ENCODE measurements at regions of chr2 and their contacts with region 1.

Region 1: DNA sequence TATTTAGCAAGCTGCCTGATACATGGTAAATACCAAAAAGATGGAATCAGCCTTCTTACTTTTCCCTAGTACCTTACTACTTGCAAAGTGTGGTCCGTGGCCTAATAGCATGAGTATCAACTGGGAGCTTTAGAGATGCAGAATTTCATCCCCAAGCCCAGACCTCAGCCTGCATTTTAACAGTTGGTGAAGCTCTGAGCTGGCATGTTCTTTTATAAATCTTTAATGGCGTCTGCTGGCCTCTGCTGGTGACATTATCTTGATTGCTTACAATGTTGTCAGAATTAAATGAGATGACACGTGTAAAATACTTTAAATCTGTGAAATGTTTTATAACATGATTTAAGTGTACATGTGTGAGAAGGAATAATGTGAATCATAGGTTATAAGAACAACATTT is 115.1 kb upstream of the NOSTRIN start:
- DNase-seq: no peak
- H3K4me3 ChIP-seq: no peak overlapping the region
- CTCF ChIP-seq: no peak

Region 2: GRCh38 chr2:168705534-168706470 is 18.5 kb after region 1 on chr2:
- CTCF ChIA-PET with region 1: interaction called, 16 read pairs
- POLR2A ChIA-PET with region 1: no interaction called
- DNase-seq: no peak
- H3K4me3 ChIP-seq: no peak overlapping the region
- CTCF ChIP-seq: peak; percentile 9

Measured in AG04449 (cell line).